Mammary epithelial cell (primary cell): ENCODE measurements at regions of chr1 and their contacts with region 1.

Region 1: GRCh38 chr1:12251442-12251841 is 21.6 kb downstream of the VPS13D start:
- DNase-seq: no peak
- H3K4me3 ChIP-seq: no peak overlapping the region
- H3K27ac ChIP-seq: no peak overlapping the region
- H3K4me1 ChIP-seq: no peaks in the 10 kb centered on the region
- H3K27me3 ChIP-seq: no peaks in the 10 kb centered on the region
- CTCF ChIP-seq: no peak

Region 2: GRCh38 chr1:12678350-12678749 is 426.9 kb after region 1 on chr1:
- CTCF ChIA-PET with region 1: no interaction called
- dilution Hi-C with region 1: no loop called
- in situ Hi-C with region 1: no loop called
- intact Hi-C with region 1: no loop called
- DNase-seq: no peak
- H3K4me3 ChIP-seq: no peak overlapping the region
- H3K27ac ChIP-seq: no peak overlapping the region
- H3K4me1 ChIP-seq: no peaks in the 10 kb centered on the region
- H3K27me3 ChIP-seq: no peaks in the 10 kb centered on the region
- CTCF ChIP-seq: no peak

Region 3: DNA sequence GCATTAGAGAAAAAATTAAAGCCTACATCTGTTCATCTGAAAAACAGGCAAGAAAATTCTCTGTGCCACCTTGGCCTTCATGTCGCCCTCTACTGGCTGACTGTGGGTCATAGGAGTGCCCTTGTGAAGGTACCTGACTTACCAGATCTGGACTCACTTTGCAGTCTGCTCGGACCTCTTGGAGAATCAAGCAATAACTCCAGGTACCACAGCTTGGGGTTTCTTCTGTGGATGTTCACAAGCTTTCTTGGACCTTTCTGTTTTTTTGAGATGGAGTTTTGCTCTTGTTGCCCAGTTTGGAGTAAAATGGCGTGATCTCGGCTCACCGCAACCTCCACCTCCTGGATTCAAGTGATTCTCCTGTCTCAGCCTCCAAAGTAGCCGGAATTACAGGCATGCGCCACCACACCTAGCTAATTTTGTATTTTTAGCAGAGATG is 976.9 kb after region 1 on chr1:
- CTCF ChIA-PET with region 1: no interaction called
- dilution Hi-C with region 1: no loop called
- in situ Hi-C with region 1: loop called in 1 of 2 experiments (anchors 25 kb)
- intact Hi-C with region 1: no loop called
- DNase-seq: no peak
- H3K4me3 ChIP-seq: no peak overlapping the region
- H3K27ac ChIP-seq: no peak overlapping the region
- H3K4me1 ChIP-seq: no peaks in the 10 kb centered on the region
- H3K27me3 ChIP-seq: no peaks in the 10 kb centered on the region
- CTCF ChIP-seq: no peak